CD4-positive, alpha-beta T cell (primary cell): ENCODE measurements at regions of chr7 and their contacts with region 1.

Region 1: DNA sequence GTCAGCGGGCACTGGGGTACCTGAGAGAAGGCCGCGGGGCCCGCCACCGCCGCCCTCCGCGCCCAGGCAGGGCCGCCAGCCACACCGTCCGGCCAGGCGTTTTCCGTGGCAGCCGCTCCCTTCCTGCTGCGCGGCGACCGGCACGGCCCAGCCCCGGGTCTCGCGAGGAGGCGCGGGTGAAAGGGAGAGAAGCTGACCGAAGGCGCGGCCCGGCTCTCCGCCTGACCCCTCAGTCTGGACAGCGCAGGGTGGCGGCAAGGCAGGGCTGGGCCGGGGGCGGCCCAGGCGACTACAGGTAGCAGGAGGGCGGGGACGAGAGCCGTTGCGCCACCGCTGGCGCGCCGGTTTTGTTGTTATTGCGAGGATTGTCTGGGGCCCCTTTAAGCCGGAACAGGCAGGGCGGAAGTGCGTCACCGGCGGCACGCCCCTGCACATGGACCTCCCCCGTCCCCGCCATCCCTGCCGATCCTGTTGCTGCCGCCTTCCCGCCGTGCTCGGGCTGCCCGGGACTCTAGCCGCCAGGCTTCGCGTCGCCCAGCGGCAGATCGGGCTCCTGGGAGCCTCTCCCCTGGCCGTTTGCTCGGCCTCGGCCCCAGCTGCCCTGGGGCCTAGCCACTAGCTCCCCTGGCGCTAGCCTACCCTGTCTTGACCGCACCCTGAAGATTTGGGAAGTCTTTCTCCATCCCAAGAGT is at the start of gene HERPUD2:
- DNase-seq: peak; percentile 88 to 96 (median 90)
- ATAC-seq: peak; percentile 82
- H3K4me3 ChIP-seq: peak within 1 kb of the TSS; percentile 97
- H3K4me3 Mint-ChIP-seq: peak within 1 kb of the TSS; percentile 99
- H3K27ac ChIP-seq: peak within 1 kb of the TSS; percentile 94 to 96
- H3K27ac Mint-ChIP-seq: peak within 1 kb of the TSS; percentile 99
- H3K4me1 ChIP-seq: peaks cover 16% of the 10 kb centered on the region
- H3K4me1 Mint-ChIP-seq: peaks cover 60% of the 10 kb centered on the region
- H3K27me3 ChIP-seq: no peaks in the 10 kb centered on the region
- H3K27me3 Mint-ChIP-seq: no peaks in the 10 kb centered on the region
- CTCF ChIP-seq: no peak
- total RNA-seq, gene HERPUD2: 113 to 127 TPM

Region 2: GRCh38 chr7:35037526-35038339 is 657.2 kb before region 1 on chr7:
- CTCF ChIA-PET with region 1: no interaction called
- POLR2A ChIA-PET with region 1: no interaction called
- intact Hi-C with region 1: loop called in 1 of 2 experiments (anchors 10 kb)
- DNase-seq: peak; percentile 66 to 96 (median 86)
- ATAC-seq: peak; percentile 73
- H3K4me3 ChIP-seq: peak overlapping the region; percentile 49
- H3K4me3 Mint-ChIP-seq: peak overlapping the region; percentile 92
- H3K27ac ChIP-seq: no peak overlapping the region
- H3K27ac Mint-ChIP-seq: peak overlapping the region; percentile 34
- H3K4me1 ChIP-seq: peaks cover 21% of the 10 kb centered on the region
- H3K4me1 Mint-ChIP-seq: peaks cover 30% of the 10 kb centered on the region
- H3K27me3 ChIP-seq: no peaks in the 10 kb centered on the region
- H3K27me3 Mint-ChIP-seq: no peaks in the 10 kb centered on the region
- CTCF ChIP-seq: peak; percentile 73

Region 3: GRCh38 chr7:35681231-35682029 is 13.5 kb before region 1 on chr7:
- CTCF ChIA-PET with region 1: interaction called, 3 read pairs
- POLR2A ChIA-PET with region 1: interaction called, 6 read pairs
- intact Hi-C with region 1: loop called in 1 of 2 experiments (anchors 2 kb)
- DNase-seq: peak in 1 of 14 experiments; percentile 35
- ATAC-seq: no peak
- H3K4me3 ChIP-seq: no peak overlapping the region
- H3K4me3 Mint-ChIP-seq: no peak overlapping the region
- H3K27ac ChIP-seq: no peak overlapping the region
- H3K27ac Mint-ChIP-seq: peak overlapping the region; percentile 6
- H3K4me1 ChIP-seq: peaks cover 18% of the 10 kb centered on the region
- H3K4me1 Mint-ChIP-seq: peaks cover 63% of the 10 kb centered on the region
- H3K27me3 ChIP-seq: no peaks in the 10 kb centered on the region
- H3K27me3 Mint-ChIP-seq: no peaks in the 10 kb centered on the region
- CTCF ChIP-seq: no peak

Region 4: GRCh38 chr7:35714862-35715261 is 19.9 kb after region 1 on chr7:
- CTCF ChIA-PET with region 1: interaction called, 6 read pairs
- POLR2A ChIA-PET with region 1: interaction called, 15 read pairs
- intact Hi-C with region 1: no loop called
- DNase-seq: no peak
- ATAC-seq: no peak
- H3K4me3 ChIP-seq: no peak overlapping the region
- H3K4me3 Mint-ChIP-seq: no peak overlapping the region
- H3K27ac ChIP-seq: no peak overlapping the region
- H3K27ac Mint-ChIP-seq: no peak overlapping the region
- H3K4me1 ChIP-seq: peaks cover 4% of the 10 kb centered on the region
- H3K4me1 Mint-ChIP-seq: peaks cover 5% of the 10 kb centered on the region
- H3K27me3 ChIP-seq: no peaks in the 10 kb centered on the region
- H3K27me3 Mint-ChIP-seq: no peaks in the 10 kb centered on the region
- CTCF ChIP-seq: no peak

Region 5: DNA sequence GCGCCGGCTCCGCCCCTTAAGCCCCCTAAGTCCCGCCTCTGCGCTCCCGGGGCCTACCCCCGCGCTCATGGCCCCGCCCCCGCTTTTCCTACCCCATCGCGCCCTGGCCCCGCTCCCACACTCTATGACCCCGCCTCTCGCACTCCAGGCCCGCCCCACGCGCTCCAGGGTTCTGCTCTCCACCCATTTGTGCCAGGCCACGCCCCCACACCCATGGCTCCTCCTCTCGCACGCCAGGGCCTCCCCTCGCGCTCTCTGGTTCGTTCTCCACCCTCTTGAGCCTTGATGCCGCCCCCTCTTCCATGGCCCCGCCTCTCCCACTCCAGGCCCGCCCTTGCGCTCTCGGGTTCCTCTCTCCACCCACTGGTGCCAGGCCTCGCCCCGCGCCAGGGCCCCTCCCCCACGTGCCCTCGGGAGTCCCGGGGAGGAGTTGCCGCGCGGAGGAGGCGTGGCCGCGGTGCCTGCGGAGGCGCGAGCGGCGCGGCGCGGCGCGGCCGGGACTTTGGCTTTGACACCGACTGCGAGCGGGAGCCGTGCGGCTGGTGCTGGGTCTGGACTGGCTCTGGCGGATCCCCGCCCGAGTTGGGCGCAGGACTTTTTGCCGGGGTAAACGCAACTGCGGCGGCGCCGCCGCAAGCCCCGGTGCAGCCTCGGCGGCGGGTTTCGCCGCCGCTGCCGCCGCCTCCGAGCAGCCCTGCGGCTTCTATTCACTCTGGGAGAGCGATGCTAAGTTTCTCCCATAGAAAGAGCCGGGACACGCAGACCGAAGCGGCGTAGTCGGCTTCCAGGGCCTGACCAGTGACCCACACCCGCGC is 458.0 kb after region 1 on chr7 and contains the start of gene EEPD1:
- CTCF ChIA-PET with region 1: no interaction called
- POLR2A ChIA-PET with region 1: no interaction called
- intact Hi-C with region 1: loop called in 1 of 2 experiments (anchors 10 kb)
- DNase-seq: peak; percentile 99 to 100 (median 100)
- ATAC-seq: peak; percentile 96
- H3K4me3 ChIP-seq: peak within 1 kb of the TSS; percentile 69
- H3K4me3 Mint-ChIP-seq: peak within 1 kb of the TSS; percentile 90
- H3K27ac ChIP-seq: peak within 1 kb of the TSS; percentile 30 to 35
- H3K27ac Mint-ChIP-seq: peak within 1 kb of the TSS; percentile 22
- H3K4me1 ChIP-seq: peaks cover 37% of the 10 kb centered on the region
- H3K4me1 Mint-ChIP-seq: peaks cover 45% of the 10 kb centered on the region
- H3K27me3 ChIP-seq: no peaks in the 10 kb centered on the region
- H3K27me3 Mint-ChIP-seq: no peaks in the 10 kb centered on the region
- CTCF ChIP-seq: no peak
- total RNA-seq, gene EEPD1: 4.4 to 4.6 TPM

Region 6: GRCh38 chr7:36360244-36360643 is 665.3 kb after region 1 on chr7:
- CTCF ChIA-PET with region 1: no interaction called
- POLR2A ChIA-PET with region 1: no interaction called
- intact Hi-C with region 1: loop called in 1 of 2 experiments (anchors 5 kb)
- DNase-seq: no peak
- ATAC-seq: no peak
- H3K4me3 ChIP-seq: no peak overlapping the region
- H3K4me3 Mint-ChIP-seq: no peak overlapping the region
- H3K27ac ChIP-seq: no peak overlapping the region
- H3K27ac Mint-ChIP-seq: no peak overlapping the region
- H3K4me1 ChIP-seq: no peaks in the 10 kb centered on the region
- H3K4me1 Mint-ChIP-seq: no peaks in the 10 kb centered on the region
- H3K27me3 ChIP-seq: no peaks in the 10 kb centered on the region
- H3K27me3 Mint-ChIP-seq: no peaks in the 10 kb centered on the region
- CTCF ChIP-seq: no peak